Activated naive CD4-positive, alpha-beta T cell treated with anti-CD3 and anti-CD28 coated beads for 36 hours (primary cell): ENCODE measurements at regions of chr9 and their contacts with region 1.

Region 1: DNA sequence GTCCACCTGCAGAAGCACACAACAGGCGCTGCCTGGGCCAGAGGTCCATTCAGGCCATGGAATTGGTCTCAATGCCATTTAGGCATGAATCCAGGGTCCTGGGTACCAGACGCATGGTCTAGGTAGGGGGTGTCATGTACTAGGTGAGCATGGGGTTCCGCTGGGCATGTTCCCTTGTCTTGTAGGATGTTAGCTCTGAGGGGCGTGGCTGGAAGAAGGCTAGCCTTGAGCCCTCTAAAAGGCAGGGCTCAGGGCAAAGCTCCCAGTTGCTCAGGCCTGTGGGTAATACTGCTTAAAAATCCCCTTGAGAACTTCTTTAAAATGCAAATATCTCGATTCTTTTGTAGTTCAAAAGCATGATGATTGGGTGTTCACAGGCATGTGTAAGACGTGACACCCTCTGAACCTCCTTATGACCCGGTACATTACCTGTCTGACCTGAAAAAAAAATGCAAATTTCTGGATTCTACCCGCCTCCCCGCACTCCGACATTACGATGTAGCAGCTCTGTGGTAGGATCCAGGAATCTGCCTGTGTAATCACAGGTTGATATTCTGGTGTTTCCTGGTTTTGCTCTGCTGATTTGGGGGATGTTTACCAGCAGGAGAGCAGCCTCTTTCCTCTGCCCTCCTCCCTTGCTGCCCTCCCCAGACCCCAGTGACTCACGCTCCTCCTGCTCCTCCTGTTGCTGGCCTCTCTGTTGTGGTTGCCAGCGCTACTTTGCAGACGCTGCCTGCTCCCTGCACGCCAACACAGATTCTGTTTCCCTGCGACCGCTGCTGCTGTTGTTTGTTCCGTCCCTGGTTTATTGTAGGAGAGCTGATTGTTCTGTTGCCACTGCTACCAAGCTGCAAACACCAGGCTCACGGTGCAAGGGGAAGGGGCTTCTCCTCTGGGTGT is 5.7 kb downstream of the TMC1 start:
- DNase-seq: peak; percentile 92
- H3K4me3 Mint-ChIP-seq: peak overlapping the region; percentile 71
- H3K27ac Mint-ChIP-seq: peak overlapping the region; percentile 91
- H3K4me1 Mint-ChIP-seq: peaks cover 38% of the 10 kb centered on the region
- H3K27me3 Mint-ChIP-seq: no peaks in the 10 kb centered on the region

Region 2: GRCh38 chr9:71783120-71783530 is 744.0 kb before region 1 on chr9:
- CTCF ChIA-PET with region 1: no interaction called
- intact Hi-C with region 1: loop called (anchors 5 kb)
- DNase-seq: peak; percentile 95
- H3K4me3 Mint-ChIP-seq: peak overlapping the region; percentile 67
- H3K27ac Mint-ChIP-seq: peak overlapping the region; percentile 92
- H3K4me1 Mint-ChIP-seq: peaks cover 47% of the 10 kb centered on the region
- H3K27me3 Mint-ChIP-seq: no peaks in the 10 kb centered on the region

Region 3: DNA sequence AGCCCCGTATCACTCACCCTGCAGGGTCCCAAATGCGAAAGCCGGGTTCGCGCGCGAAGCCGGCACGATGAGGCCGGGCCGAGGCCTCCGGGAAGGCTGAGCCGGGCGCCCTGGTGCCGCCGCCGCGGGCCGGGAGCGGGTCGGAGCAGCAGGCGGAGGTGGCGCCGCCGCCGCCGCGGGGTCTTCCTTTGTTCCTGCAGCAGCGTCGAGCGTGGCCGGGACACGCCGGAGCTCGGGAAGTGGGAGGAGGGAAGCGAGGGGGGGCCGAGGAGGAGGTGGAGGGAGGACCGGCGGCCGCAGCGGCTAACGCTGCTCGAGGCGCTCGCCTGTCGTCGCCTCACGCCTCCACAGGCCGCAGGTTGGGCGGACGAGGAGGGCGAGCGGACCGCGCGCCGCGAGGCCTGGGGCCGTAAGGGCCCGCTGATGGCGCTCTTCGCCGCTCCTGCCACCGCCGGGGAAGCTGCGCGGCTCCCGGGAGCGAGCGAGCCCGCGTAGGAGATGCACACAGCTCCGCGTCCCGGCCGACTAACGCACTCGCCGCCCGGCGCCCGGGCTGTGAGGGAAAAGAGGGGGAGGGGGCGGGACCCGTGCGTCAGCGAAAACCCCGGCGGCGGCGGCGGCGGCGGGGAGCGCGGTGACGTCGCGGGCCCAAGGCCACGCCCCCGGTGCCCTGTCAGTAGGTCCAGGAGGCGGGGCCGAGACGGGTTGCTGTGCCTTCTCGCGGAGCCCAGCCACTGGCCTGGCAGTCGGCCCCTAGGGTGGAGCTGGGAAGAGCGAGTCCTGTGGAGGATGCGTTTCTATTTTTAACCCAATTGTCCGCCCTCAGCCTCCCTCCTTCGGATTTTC is 162.2 kb before region 1 on chr9 and contains the start of gene ZFAND5:
- CTCF ChIA-PET with region 1: no interaction called
- intact Hi-C with region 1: loop called (anchors 1 kb)
- DNase-seq: peak; percentile 94
- H3K4me3 Mint-ChIP-seq: peak within 1 kb of the TSS; percentile 82
- H3K27ac Mint-ChIP-seq: peak within 1 kb of the TSS; percentile 95
- H3K4me1 Mint-ChIP-seq: peaks cover 31% of the 10 kb centered on the region
- H3K27me3 Mint-ChIP-seq: no peaks in the 10 kb centered on the region
- total RNA-seq, gene ZFAND5: 71.9 to 73.2 TPM

Region 4: DNA sequence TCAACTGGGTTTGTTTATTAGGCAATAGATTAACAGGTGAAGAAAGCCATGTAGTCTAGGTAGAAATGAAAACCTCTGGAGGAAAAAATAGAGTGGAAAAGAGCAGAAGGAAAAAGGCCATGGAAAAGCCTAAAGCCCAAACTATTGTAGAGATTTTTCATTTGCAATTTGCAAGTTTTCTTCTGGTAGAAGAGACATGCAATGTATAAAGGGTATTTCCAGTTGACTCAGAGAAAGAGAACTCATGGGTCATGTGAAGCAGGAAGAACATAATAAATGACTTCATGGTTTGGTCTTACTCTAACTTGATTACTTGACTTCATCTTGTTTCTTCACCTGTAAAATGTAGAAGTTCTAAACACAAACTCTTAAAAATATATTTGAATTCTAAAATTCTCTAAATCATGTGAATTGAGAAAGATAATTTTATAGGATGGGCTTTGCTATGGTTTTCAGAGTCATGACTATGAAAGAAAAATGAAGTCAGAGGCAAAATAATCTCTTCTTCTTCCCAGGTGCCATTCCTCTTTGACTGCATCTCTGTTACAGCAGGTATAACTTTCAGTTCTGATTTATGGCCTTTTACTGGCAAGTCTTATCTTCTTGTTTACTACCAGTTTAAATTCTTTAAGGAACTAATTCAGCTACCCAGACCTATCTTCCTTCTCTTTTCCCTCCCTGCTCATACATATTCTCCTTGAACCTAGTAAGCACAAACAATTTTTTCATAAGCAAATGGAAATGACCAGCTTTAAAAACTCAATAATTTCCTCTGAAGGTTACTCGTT is 53.5 kb before region 1 on chr9:
- CTCF ChIA-PET with region 1: no interaction called
- intact Hi-C with region 1: loop called (anchors 1 kb)
- DNase-seq: no peak
- H3K4me3 Mint-ChIP-seq: no peak overlapping the region
- H3K27ac Mint-ChIP-seq: peak overlapping the region; percentile 84
- H3K4me1 Mint-ChIP-seq: peaks cover 42% of the 10 kb centered on the region
- H3K27me3 Mint-ChIP-seq: no peaks in the 10 kb centered on the region

Region 5: DNA sequence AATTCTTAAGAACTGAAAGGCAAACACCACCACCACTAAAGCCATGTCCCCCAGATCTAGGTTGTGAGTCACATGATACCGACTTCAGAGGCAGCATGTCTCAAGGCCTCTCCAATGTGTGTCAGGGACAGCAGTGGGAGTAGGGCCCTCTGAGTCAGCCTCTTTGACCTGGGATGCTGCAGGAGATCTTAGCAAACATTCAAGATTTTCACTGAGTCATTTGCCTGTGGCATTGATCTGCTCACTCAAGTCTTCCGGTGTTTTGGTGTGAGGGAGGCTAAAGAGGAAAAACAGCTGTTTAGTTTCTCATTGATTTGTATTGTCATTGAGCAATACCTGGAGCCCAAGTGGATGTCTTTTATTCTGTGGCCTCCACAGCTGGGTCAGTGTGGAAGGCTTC is 30.4 kb after region 1 on chr9:
- CTCF ChIA-PET with region 1: no interaction called
- intact Hi-C with region 1: loop called (anchors 1 kb)
- DNase-seq: peak; percentile 39
- H3K4me3 Mint-ChIP-seq: no peak overlapping the region
- H3K27ac Mint-ChIP-seq: no peak overlapping the region
- H3K4me1 Mint-ChIP-seq: peaks cover 11% of the 10 kb centered on the region
- H3K27me3 Mint-ChIP-seq: no peaks in the 10 kb centered on the region

Region 6: GRCh38 chr9:72575666-72576065 is 48.5 kb after region 1 on chr9:
- CTCF ChIA-PET with region 1: no interaction called
- intact Hi-C with region 1: no loop called
- DNase-seq: no peak
- H3K4me3 Mint-ChIP-seq: no peak overlapping the region
- H3K27ac Mint-ChIP-seq: no peak overlapping the region
- H3K4me1 Mint-ChIP-seq: peaks cover 6% of the 10 kb centered on the region
- H3K27me3 Mint-ChIP-seq: peaks cover 4% of the 10 kb centered on the region

Region 7: DNA sequence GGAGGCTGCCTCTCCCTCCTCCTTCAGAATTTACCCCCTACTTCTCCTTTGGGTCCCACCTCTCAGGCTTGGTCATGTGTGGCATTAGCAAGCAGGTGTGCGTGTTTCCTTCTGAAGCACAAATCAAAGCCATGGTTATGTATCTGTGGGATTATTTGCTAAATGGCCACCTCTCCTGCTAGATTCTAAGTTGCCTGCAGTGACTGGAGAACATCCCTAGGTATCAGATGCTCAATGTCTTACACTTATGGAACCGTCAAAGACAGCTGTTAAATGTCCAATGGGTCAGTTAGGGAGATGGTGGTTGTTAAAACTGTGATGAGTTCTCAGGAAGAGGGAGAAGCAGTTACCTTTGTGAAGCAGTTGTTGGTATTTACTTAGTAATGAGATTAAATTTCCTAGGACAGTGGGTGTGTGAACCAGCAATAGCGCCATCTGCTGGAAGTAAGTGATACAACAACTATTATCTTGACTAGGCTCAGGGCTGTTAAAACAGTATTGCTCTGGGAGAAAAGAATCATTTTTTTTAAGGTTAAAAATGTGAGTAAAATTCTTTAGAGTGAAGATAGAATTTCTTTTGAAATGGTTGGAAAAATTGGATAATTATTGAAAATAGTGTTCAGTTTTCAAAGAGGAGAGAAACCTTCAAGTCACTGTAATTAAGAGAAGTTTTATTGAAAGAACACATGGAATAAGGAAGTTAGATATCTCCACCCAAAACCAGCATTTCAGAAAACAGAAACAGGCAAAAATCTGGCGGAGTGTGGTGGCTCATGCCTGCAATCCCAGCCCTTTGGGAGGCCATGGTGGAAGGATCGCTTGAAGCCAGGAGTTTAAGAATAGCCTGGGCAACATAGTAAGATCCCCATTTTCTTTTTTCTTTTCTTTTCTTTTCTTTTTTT is 65.6 kb after region 1 on chr9:
- CTCF ChIA-PET with region 1: no interaction called
- intact Hi-C with region 1: loop called (anchors 1 kb)
- DNase-seq: peak; percentile 41
- H3K4me3 Mint-ChIP-seq: no peak overlapping the region
- H3K27ac Mint-ChIP-seq: no peak overlapping the region
- H3K4me1 Mint-ChIP-seq: peaks cover 6% of the 10 kb centered on the region
- H3K27me3 Mint-ChIP-seq: no peaks in the 10 kb centered on the region

Region 8: GRCh38 chr9:73149371-73150067 is 622.4 kb after region 1 on chr9:
- CTCF ChIA-PET with region 1: no interaction called
- intact Hi-C with region 1: loop called (anchors 5 kb)
- DNase-seq: peak; percentile 23
- H3K4me3 Mint-ChIP-seq: peak overlapping the region; percentile 28
- H3K27ac Mint-ChIP-seq: peak overlapping the region; percentile 79
- H3K4me1 Mint-ChIP-seq: peaks cover 55% of the 10 kb centered on the region
- H3K27me3 Mint-ChIP-seq: no peaks in the 10 kb centered on the region